PC-9 (cell line): ENCODE measurements at regions of chr2 and their contacts with region 1.

Region 1: DNA sequence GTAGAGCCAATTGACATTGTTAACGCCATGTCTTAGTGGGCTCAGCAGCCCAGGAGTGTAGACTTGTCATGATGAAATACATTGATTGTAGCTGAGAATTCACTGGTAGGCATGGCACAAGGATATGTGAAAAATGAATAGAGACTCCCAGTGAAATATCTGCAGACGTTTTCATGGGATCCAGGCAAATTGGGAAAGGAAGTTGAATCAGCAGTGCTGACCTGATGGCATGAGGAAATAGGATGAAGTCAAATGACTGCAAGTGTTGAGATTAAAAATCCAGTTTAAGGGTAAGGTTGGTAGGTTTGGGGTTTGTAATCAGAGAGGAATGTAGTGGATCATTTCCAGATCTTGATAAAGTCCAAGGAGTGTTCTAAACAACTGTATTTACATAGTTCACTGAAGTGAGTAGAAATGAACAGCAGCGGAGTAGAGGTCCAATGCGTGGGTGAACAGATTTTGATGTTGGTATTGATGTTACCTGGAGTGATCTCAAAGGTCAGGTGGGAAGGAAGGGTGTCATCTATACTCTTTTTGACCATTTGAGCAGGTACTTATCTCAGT is 24.6 kb downstream of the INSIG2 start:
- DNase-seq: peak; percentile 67 to 100
- H3K4me3 ChIP-seq: 0 out of 2 replicates have a peak overlapping the region, but pooled peaks have one; percentile 4
- H3K27ac ChIP-seq: peak overlapping the region; percentile 99
- H3K4me1 ChIP-seq: peaks cover 45% of the 10 kb centered on the region
- H3K27me3 ChIP-seq: no peaks in the 10 kb centered on the region
- CTCF ChIP-seq: no peak

Region 2: DNA sequence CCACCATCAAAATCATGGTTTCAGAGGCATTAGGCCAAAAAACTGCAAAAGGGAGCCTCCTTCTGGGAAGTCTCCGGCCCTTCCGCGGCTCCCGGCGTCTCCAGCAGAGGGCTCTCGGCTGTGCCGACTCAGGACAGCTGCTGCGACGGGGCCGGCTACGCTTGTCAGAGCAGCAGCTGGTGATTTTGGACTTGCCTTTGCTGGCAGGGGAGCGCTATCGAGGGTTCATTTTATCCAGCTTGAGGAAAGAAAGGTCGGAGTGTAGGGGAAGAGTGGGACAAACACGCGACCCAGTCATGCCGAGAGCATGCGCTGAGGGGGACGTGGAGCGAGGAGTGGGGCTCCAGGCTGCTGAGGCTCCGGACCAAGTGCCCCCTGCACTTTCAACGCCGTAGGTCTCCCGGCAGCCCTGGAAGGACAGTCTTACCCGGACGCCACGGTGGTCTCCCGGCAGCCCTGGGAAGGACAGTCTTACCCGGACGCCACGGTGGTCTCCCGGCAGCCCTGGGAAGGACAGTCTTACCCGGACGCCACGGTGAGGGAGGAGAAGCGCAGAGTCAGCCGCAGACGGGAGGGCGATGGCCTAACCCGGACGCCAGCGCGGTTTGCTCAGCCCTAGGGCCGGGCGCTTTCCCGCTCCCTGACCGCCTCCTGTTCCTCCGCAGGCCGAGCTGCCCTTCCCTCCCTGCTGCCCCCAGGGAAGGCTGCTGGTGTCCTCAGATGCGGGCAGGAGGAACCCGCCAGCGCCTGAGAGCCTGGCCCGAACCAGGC is 276.7 kb before region 1 on chr2:
- CTCF ChIA-PET with region 1: no interaction called
- POLR2A ChIA-PET with region 1: no interaction called
- intact Hi-C with region 1: no loop called
- DNase-seq: no peak
- H3K4me3 ChIP-seq: no peak overlapping the region
- H3K27ac ChIP-seq: no peak overlapping the region
- H3K4me1 ChIP-seq: no peaks in the 10 kb centered on the region
- H3K27me3 ChIP-seq: no peaks in the 10 kb centered on the region
- CTCF ChIP-seq: peak; percentile 28; the same call in 1 of the 2 replicates

Region 3: DNA sequence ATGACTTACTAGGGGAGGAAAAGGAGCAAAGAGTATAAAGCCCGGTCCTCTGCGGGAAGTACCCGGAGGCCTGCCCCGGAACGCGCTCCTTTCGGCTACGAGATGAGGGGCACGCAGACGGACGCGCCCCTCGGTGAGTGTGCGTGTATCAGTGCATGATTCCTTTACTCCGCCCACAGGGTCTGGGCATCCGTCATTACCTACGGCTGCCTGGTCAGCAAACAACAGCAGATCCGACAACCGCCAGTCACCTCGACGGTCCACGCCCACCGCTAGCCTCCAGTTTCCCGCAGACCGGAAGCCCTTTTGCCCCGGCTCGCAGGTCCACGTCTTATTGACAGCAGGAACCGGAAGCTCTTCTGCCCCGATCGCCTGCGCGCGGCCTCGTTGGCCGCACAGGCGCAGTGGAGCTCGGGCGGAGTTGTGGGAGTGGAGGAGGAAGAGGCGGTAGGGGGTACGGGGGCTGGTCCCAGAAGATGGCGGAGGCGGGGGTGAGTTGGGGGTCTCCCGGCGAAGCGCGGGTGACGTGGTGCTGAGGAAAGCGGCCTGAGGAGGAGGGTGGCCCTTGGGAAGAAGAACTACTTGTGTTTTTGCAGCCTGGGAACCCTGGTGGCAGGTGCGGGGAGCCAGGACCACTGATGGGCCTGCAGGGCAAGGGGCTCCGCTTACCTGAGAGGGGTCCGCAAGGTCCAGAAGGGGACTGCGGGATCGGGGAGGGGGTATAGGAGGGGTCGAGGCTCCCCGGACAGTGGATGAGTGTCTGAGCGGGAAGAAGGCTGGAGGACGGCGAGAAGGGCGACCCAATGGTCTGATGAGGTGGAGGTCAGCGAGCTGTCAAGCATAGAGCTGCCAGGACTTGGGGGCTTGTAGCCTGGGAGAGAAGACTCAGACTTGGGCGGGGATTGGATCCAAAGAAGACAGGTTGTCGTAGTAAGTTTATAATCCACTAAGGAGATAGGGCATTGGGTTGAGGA is 24.5 kb before region 1 on chr2 and contains the start of gene INSIG2:
- CTCF ChIA-PET with region 1: no interaction called
- POLR2A ChIA-PET with region 1: interaction called, 6 read pairs
- intact Hi-C with region 1: loop called (anchors 1 kb)
- DNase-seq: peak; percentile 99 to 100
- H3K4me3 ChIP-seq: peak within 1 kb of the TSS; percentile 79
- H3K27ac ChIP-seq: peak within 1 kb of the TSS; percentile 94
- H3K4me1 ChIP-seq: peaks cover 69% of the 10 kb centered on the region
- H3K27me3 ChIP-seq: no peaks in the 10 kb centered on the region
- CTCF ChIP-seq: peak; percentile 13; the same call in 1 of the 2 replicates
- total RNA-seq, gene INSIG2: 33.6 and 54.8 TPM in 2 replicates

Region 4: GRCh38 chr2:118169359-118170007 is 56.6 kb after region 1 on chr2:
- CTCF ChIA-PET with region 1: no interaction called
- POLR2A ChIA-PET with region 1: no interaction called
- intact Hi-C with region 1: loop called (anchors 2 kb)
- DNase-seq: peak; percentile 43 to 51
- H3K4me3 ChIP-seq: no peak overlapping the region
- H3K27ac ChIP-seq: no peak overlapping the region
- H3K4me1 ChIP-seq: peaks cover 15% of the 10 kb centered on the region
- H3K27me3 ChIP-seq: no peaks in the 10 kb centered on the region
- CTCF ChIP-seq: no peak

Region 5: GRCh38 chr2:118177884-118178283 is 65.0 kb after region 1 on chr2:
- CTCF ChIA-PET with region 1: no interaction called
- POLR2A ChIA-PET with region 1: interaction called, 13 read pairs
- intact Hi-C with region 1: no loop called
- DNase-seq: peak; percentile 16 to 62
- H3K4me3 ChIP-seq: no peak overlapping the region
- H3K27ac ChIP-seq: no peak overlapping the region
- H3K4me1 ChIP-seq: peaks cover 23% of the 10 kb centered on the region
- H3K27me3 ChIP-seq: no peaks in the 10 kb centered on the region
- CTCF ChIP-seq: no peak

Region 6: GRCh38 chr2:118185210-118186109 is 72.6 kb after region 1 on chr2:
- CTCF ChIA-PET with region 1: no interaction called
- POLR2A ChIA-PET with region 1: no interaction called
- intact Hi-C with region 1: loop called (anchors 1 kb)
- DNase-seq: peak; percentile 57 to 67
- H3K4me3 ChIP-seq: peak overlapping the region; percentile 75
- H3K27ac ChIP-seq: peak overlapping the region; percentile 92
- H3K4me1 ChIP-seq: peaks cover 23% of the 10 kb centered on the region
- H3K27me3 ChIP-seq: no peaks in the 10 kb centered on the region
- CTCF ChIP-seq: no peak; the same call in 1 of the 2 replicates

Region 7: DNA sequence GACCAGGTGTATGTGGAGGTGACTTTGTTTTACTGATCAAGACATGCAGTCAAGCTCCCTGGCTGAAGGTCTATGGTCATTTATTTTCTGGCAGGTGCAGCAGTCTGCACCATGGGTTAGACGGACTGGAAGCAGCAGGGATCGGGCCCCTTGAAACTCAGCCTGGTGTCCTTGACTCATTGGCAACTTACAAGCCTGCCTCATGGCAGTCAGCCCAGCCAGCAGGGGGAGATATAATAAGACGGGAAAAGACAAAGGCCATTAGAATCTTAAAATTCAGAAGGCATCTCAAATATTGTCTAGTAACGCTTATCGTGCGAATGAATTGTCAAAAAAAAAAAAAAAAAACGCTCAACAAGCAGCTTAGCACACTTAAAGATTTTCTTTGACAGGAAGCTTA is 426.4 kb after region 1 on chr2:
- CTCF ChIA-PET with region 1: no interaction called
- POLR2A ChIA-PET with region 1: no interaction called
- intact Hi-C with region 1: no loop called
- DNase-seq: peak in 1 of 2 experiments; percentile 3
- H3K4me3 ChIP-seq: no peak overlapping the region
- H3K27ac ChIP-seq: no peak overlapping the region
- H3K4me1 ChIP-seq: no peaks in the 10 kb centered on the region
- H3K27me3 ChIP-seq: 0 out of 2 replicates have a peak, but pooled peaks cover 3% of the 10 kb centered on the region
- CTCF ChIP-seq: peak; percentile 56